Naive thymus-derived CD4-positive, alpha-beta T cell (primary cell): ENCODE measurements at regions of chr5 and their contacts with region 1.

Region 1: DNA sequence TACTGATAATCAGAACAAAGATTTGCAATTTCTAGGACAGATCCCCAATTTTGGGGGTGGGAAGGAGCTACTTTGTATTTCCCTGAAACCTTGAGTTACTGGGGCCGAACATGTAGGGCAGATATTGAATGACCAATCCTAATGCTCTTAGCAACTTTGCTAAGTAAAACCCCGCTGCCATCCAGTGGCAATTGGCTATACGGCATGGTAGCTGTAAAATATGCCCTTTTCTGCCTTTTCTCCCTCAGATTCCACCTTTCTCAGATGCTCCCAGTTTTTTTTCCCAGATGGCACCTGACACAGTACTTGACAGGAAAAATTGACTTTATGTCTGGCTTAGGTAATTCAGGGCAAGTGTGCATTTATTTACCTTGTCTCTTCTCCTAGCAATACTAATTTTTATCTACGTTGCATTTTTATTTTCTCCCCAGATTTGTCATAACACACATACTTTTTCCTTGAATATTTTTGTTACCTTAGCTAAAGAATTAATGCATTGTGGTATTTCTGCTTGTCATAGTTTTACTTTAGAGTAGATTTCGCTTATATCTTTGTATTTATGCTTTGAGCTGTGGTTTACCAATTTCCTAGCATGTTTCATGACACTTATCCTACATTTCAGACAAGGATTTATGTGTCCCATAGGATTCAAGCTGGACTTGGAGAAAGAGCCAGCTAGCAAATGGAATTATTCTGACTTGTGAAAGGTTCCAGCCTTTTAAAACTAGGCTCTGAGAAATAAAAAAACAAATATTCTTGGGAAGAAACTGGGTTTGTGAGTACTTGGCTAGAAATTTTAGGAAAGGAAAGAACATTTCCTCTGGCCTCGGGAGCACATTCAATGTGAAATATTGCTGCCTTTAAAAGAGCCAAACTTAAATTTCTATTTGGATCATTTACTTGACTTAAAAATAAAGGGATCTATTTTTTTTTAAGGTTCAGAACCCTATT is 37.4 kb downstream of the PIK3R1 start:
- DNase-seq: peak in 5 of 9 donors; percentile 31 to 43 (median 33)
- ATAC-seq: peak; percentile 53
- H3K4me3 ChIP-seq: no peak overlapping the region
- H3K4me3 Mint-ChIP-seq: peak overlapping the region in 5 of 10 donors; percentile 1 to 79 (median 57)
- H3K27ac ChIP-seq: peak overlapping the region; percentile 60
- H3K27ac Mint-ChIP-seq: peak overlapping the region in 8 of 9 donors; percentile 53 to 95 (median 92)
- H3K4me1 ChIP-seq: peaks cover 67 to 77% of the 10 kb centered on the region in 2 donors
- H3K4me1 Mint-ChIP-seq: peaks cover 71 to 98% (median 94%) of the 10 kb centered on the region in 7 donors
- H3K27me3 ChIP-seq: no peaks in the 10 kb centered on the region
- H3K27me3 Mint-ChIP-seq: no peaks in the 10 kb centered on the region

Region 2: DNA sequence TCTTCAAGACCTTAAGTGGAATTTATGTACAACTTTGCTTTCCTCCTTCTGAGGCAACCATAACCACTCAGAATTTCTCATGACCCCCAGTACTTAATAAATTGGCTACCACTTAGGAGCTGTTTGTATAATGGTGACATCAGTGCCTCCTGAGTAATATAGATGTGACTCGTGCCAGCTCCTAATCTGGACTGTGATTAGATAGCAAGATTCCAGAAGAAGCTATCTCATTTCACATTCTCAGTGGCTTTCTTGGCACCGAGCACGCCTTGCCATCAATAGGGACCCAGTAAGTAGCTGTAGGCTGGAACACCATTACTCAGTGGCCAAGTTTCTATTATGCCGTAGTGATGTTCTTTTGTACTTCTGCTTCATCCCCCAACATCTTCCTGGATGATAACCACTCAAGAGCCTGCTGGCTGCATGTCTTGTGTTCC is 1285.1 kb before region 1 on chr5:
- CTCF ChIA-PET with region 1: no interaction called
- POLR2A ChIA-PET with region 1: no interaction called
- intact Hi-C with region 1: no loop called
- DNase-seq: no peak
- ATAC-seq: no peak
- H3K4me3 ChIP-seq: no peak overlapping the region
- H3K4me3 Mint-ChIP-seq: no peak overlapping the region
- H3K27ac ChIP-seq: no peak overlapping the region
- H3K27ac Mint-ChIP-seq: no peak overlapping the region
- H3K4me1 ChIP-seq: no peaks in the 10 kb centered on the region
- H3K4me1 Mint-ChIP-seq: peaks cover 0 to 4% (median 0%) of the 10 kb centered on the region in 7 donors
- H3K27me3 ChIP-seq: no peaks in the 10 kb centered on the region
- H3K27me3 Mint-ChIP-seq: peaks cover 0 to 6% (median 0%) of the 10 kb centered on the region in 5 donors

Region 3: GRCh38 chr5:67156976-67157583 is 1095.9 kb before region 1 on chr5:
- CTCF ChIA-PET with region 1: no interaction called
- POLR2A ChIA-PET with region 1: interaction called, 3 read pairs
- intact Hi-C with region 1: loop called in 1 of 2 experiments (anchors 2 kb)
- DNase-seq: peak in 7 of 9 donors; percentile 28 to 64 (median 52)
- ATAC-seq: peak; percentile 75
- H3K4me3 ChIP-seq: no peak overlapping the region
- H3K4me3 Mint-ChIP-seq: peak overlapping the region in 4 of 10 donors; percentile 2 to 53 (median 48)
- H3K27ac ChIP-seq: no peak overlapping the region
- H3K27ac Mint-ChIP-seq: peak overlapping the region in 8 of 9 donors; percentile 49 to 100 (median 74)
- H3K4me1 ChIP-seq: peaks cover 41 to 42% of the 10 kb centered on the region in 2 donors
- H3K4me1 Mint-ChIP-seq: peaks cover 25 to 61% (median 55%) of the 10 kb centered on the region in 7 donors
- H3K27me3 ChIP-seq: no peaks in the 10 kb centered on the region
- H3K27me3 Mint-ChIP-seq: no peaks in the 10 kb centered on the region

Region 4: GRCh38 chr5:67516948-67517565 is 735.9 kb before region 1 on chr5:
- CTCF ChIA-PET with region 1: no interaction called
- POLR2A ChIA-PET with region 1: no interaction called
- intact Hi-C with region 1: loop called in 1 of 2 experiments (anchors 10 kb)
- DNase-seq: no peak
- ATAC-seq: no peak
- H3K4me3 ChIP-seq: no peak overlapping the region
- H3K4me3 Mint-ChIP-seq: no peak overlapping the region
- H3K27ac ChIP-seq: no peak overlapping the region
- H3K27ac Mint-ChIP-seq: peak overlapping the region in 4 of 9 donors; percentile 28 to 46 (median 38)
- H3K4me1 ChIP-seq: peaks cover 42% of the 10 kb centered on the region in 2 donors
- H3K4me1 Mint-ChIP-seq: peaks cover 42 to 71% (median 69%) of the 10 kb centered on the region in 7 donors
- H3K27me3 ChIP-seq: no peaks in the 10 kb centered on the region
- H3K27me3 Mint-ChIP-seq: peaks cover 0 to 10% (median 0%) of the 10 kb centered on the region in 5 donors

Region 5: DNA sequence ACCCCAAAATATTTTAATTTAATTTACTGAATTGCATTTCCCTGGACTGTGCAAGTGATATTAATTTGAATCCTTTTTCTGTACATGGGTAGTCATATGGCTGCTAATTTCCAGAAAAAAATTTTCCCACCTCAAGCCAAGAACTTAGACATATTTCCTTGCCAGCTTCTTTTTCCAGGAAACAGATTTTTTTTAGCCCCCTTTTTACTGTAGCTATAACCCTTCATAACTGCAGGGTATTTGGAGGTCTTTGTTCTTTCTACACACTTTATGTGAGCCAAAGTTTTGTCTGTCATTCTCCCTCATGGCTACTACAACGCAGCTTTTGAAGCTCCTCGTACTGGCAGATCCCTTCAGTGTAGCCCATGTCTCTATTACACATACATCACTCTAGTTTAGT is 298.6 kb before region 1 on chr5:
- CTCF ChIA-PET with region 1: no interaction called
- POLR2A ChIA-PET with region 1: no interaction called
- intact Hi-C with region 1: no loop called
- DNase-seq: no peak
- ATAC-seq: no peak
- H3K4me3 ChIP-seq: no peak overlapping the region
- H3K4me3 Mint-ChIP-seq: no peak overlapping the region
- H3K27ac ChIP-seq: no peak overlapping the region
- H3K27ac Mint-ChIP-seq: no peak overlapping the region
- H3K4me1 ChIP-seq: no peaks in the 10 kb centered on the region
- H3K4me1 Mint-ChIP-seq: no peaks in the 10 kb centered on the region
- H3K27me3 ChIP-seq: peaks cover 0 to 3% of the 10 kb centered on the region in 2 donors
- H3K27me3 Mint-ChIP-seq: peaks cover 0 to 18% (median 16%) of the 10 kb centered on the region in 5 donors

Region 6: GRCh38 chr5:68239487-68239886 is 13.5 kb before region 1 on chr5:
- CTCF ChIA-PET with region 1: interaction called, 4 read pairs
- POLR2A ChIA-PET with region 1: interaction called, 7 read pairs
- intact Hi-C with region 1: loop called in 1 of 2 experiments (anchors 1 kb)
- DNase-seq: peak; percentile 50 to 91 (median 86)
- ATAC-seq: peak; percentile 98
- H3K4me3 ChIP-seq: no peak overlapping the region
- H3K4me3 Mint-ChIP-seq: peak overlapping the region; percentile 11 to 84 (median 70)
- H3K27ac ChIP-seq: peak overlapping the region; percentile 70
- H3K27ac Mint-ChIP-seq: peak overlapping the region; percentile 69 to 98 (median 87)
- H3K4me1 ChIP-seq: peaks cover 41 to 51% of the 10 kb centered on the region in 2 donors
- H3K4me1 Mint-ChIP-seq: peaks cover 52 to 93% (median 90%) of the 10 kb centered on the region in 7 donors
- H3K27me3 ChIP-seq: no peaks in the 10 kb centered on the region
- H3K27me3 Mint-ChIP-seq: no peaks in the 10 kb centered on the region

Region 7: DNA sequence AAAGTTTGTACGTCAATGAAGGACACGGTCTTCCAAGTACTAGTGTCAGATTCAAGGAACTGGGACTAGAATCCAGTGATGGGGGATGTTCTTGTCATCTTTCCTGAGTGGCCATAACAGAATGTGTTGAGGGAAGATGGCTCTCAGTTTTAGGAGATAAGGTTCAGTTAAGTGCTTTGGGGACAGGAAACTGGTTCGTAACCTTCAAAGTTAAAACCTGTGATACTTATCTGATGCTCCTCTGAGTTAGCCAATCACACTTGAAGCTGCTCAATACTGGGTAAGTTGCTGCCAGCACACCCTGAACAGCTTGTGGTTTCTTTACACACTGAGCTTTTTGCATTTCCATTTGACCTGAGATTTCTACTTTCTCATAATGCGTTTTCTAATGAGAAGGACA is 27.0 kb after region 1 on chr5:
- CTCF ChIA-PET with region 1: interaction called, 7 read pairs
- POLR2A ChIA-PET with region 1: interaction called, 12 read pairs
- intact Hi-C with region 1: loop called in 1 of 2 experiments (anchors 2 kb)
- DNase-seq: peak in 8 of 9 donors; percentile 32 to 84 (median 80)
- ATAC-seq: peak; percentile 94
- H3K4me3 ChIP-seq: peak overlapping the region; percentile 63
- H3K4me3 Mint-ChIP-seq: peak overlapping the region; percentile 84 to 95 (median 90)
- H3K27ac ChIP-seq: peak overlapping the region; percentile 70
- H3K27ac Mint-ChIP-seq: peak overlapping the region; percentile 94 to 98 (median 97)
- H3K4me1 ChIP-seq: peaks cover 59 to 65% of the 10 kb centered on the region in 2 donors
- H3K4me1 Mint-ChIP-seq: peaks cover 39 to 94% (median 81%) of the 10 kb centered on the region in 7 donors
- H3K27me3 ChIP-seq: no peaks in the 10 kb centered on the region
- H3K27me3 Mint-ChIP-seq: no peaks in the 10 kb centered on the region